Aorta (tissue), 5 donors: ENCODE measurements at regions of chr5 and their contacts with region 1.

Region 1: GRCh38 chr5:55172051-55172899 is 702 bp downstream of the CDC20B start:
- DNase-seq: no peak
- ATAC-seq: peak; percentile 87
- H3K4me3 ChIP-seq: peak overlapping the region in 1 of 2 donors; percentile 53
- H3K27ac ChIP-seq: no peak overlapping the region
- H3K4me1 ChIP-seq: no peaks in the 10 kb centered on the region
- H3K27me3 ChIP-seq: no peaks in the 10 kb centered on the region

Region 2: DNA sequence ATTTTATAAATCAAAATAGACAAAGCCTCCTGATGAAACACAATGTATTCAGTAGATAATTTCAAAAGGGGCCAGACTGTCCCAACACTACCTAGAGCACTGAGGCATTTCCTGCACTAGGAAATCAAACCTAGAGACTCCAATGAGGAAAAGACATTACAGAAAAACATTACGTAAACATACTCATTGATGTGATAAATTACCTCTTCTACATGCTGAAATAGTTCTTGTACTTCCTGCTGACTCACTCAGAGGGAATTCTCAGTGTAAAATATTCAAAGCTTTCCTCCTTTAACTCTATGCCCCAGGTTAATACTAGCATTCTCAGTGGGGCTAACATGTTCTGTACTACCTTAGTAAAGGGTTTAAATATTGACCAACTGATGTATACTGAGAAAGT is 364.9 kb before region 1 on chr5:
- intact Hi-C with region 1: no loop called
- DNase-seq: no peak
- ATAC-seq: no peak
- H3K4me3 ChIP-seq: no peak overlapping the region
- H3K27ac ChIP-seq: peak overlapping the region; percentile 29 to 67
- H3K4me1 ChIP-seq: peaks cover 0 to 2% of the 10 kb centered on the region in 2 donors
- H3K27me3 ChIP-seq: no peaks in the 10 kb centered on the region

Region 3: GRCh38 chr5:55226027-55226933 is 54.0 kb after region 1 on chr5:
- intact Hi-C with region 1: loop called (anchors 2 to 10 kb)
- DNase-seq: peak in 1 of 2 donors; percentile 84
- ATAC-seq: peak; percentile 43
- H3K4me3 ChIP-seq: no peak overlapping the region
- H3K27ac ChIP-seq: no peak overlapping the region
- H3K4me1 ChIP-seq: no peaks in the 10 kb centered on the region
- H3K27me3 ChIP-seq: no peaks in the 10 kb centered on the region